Aorta (tissue), 5 donors: ENCODE measurements at regions of chr12 and their contacts with region 1.

Region 1: GRCh38 chr12:8681041-8681902 is 16.5 kb upstream of the RIMKLB start:
- DNase-seq: no peak
- ATAC-seq: peak; percentile 51
- H3K4me3 ChIP-seq: no peak overlapping the region
- H3K27ac ChIP-seq: peak overlapping the region in 1 of 2 donors; percentile 41
- H3K4me1 ChIP-seq: no peaks in the 10 kb centered on the region
- H3K27me3 ChIP-seq: no peaks in the 10 kb centered on the region

Region 2: GRCh38 chr12:8823565-8824300 is 142.5 kb after region 1 on chr12:
- intact Hi-C with region 1: loop called (anchors 1 kb)
- DNase-seq: no peak
- ATAC-seq: peak; percentile 71
- H3K4me3 ChIP-seq: no peak overlapping the region
- H3K27ac ChIP-seq: no peak overlapping the region
- H3K4me1 ChIP-seq: peaks cover 0 to 4% of the 10 kb centered on the region in 2 donors
- H3K27me3 ChIP-seq: no peaks in the 10 kb centered on the region

Region 3: GRCh38 chr12:8890313-8891085 is 209.2 kb after region 1 on chr12:
- intact Hi-C with region 1: loop called (anchors 5 kb)
- DNase-seq: no peak
- ATAC-seq: peak; percentile 86
- H3K4me3 ChIP-seq: peak overlapping the region; percentile 37 to 55
- H3K27ac ChIP-seq: no peak overlapping the region
- H3K4me1 ChIP-seq: no peaks in the 10 kb centered on the region
- H3K27me3 ChIP-seq: no peaks in the 10 kb centered on the region